ENCODE measurements at regions of chr6 and their contacts with region 1.

Region 1: DNA sequence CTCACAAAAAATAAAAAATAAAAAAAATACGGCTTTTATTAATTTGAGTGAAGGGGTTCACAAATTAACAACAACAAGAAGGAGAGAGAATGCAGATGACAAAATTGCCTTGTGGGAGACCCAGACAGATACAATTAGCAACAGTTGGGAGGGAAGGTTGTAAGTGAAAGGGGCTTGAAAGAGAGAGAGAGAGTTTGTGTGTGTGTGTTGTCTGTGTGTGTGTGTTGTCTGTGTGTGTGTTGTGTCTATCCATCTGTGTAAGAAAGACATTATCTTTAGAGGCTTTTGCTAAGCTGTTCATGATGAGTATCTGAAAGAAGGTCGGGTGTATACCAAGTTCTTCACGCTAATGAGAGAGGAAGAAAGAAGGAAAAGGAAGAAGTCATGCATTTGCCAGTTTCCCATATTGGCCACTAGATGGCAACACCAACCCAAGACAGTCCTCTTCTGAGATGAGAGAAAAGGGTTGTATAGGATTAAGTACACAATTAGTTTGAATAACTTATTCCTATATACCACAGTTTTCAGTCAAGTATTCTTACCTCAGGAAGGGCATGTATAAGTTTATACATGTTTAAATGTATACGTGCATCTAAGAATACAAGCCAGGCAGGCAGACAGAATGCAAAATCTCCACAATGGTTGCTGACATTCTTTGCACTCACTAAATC is 63.7 kb upstream of the CD2AP start:
- DNase-seq: no peak
- ATAC-seq: peak; percentile 92
- H3K4me3 ChIP-seq: peak overlapping the region; percentile 47 to 92
- H3K27ac ChIP-seq: no peak overlapping the region
- H3K4me1 ChIP-seq: no peaks in the 10 kb centered on the region
- H3K27me3 ChIP-seq: no peaks in the 10 kb centered on the region

Region 2: DNA sequence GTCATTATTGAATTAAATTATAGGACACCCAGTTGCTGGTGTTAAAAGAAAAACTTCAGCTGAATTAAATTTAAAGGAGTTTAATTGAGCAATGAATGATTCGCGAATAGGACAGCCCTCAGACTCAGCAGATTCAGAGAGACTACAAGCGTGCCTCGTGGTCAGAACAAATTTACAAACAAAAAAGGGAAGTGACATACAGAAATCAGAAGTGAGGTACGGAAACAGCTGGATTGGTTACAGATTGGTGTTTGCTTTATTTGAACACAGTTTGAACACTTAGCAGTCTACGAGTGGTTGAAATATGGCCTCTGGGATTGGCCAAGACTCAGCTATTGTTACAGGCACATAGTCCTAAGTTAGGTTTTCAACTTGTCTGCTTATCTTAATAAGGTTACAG is 78.4 kb before region 1 on chr6:
- intact Hi-C with region 1: no loop called
- DNase-seq: no peak
- ATAC-seq: no peak
- H3K4me3 ChIP-seq: no peak overlapping the region
- H3K27ac ChIP-seq: no peak overlapping the region
- H3K4me1 ChIP-seq: no peaks in the 10 kb centered on the region
- H3K27me3 ChIP-seq: no peaks in the 10 kb centered on the region

Region 3: GRCh38 chr6:47477497-47478232 is 63.8 kb after region 1 on chr6 and contains the start of gene CD2AP:
- intact Hi-C with region 1: loop called in 1 of 2 experiments (anchors 10 kb)
- DNase-seq: peak; percentile 87 to 95
- ATAC-seq: peak; percentile 95
- H3K4me3 ChIP-seq: peak within 1 kb of the TSS; percentile 50 to 88
- H3K27ac ChIP-seq: peak within 1 kb of the TSS; percentile 45 to 87
- H3K4me1 ChIP-seq: no peaks in the 10 kb centered on the region
- H3K27me3 ChIP-seq: no peaks in the 10 kb centered on the region
- total RNA-seq, gene CD2AP: 25.2 to 33.4 TPM

Region 4: DNA sequence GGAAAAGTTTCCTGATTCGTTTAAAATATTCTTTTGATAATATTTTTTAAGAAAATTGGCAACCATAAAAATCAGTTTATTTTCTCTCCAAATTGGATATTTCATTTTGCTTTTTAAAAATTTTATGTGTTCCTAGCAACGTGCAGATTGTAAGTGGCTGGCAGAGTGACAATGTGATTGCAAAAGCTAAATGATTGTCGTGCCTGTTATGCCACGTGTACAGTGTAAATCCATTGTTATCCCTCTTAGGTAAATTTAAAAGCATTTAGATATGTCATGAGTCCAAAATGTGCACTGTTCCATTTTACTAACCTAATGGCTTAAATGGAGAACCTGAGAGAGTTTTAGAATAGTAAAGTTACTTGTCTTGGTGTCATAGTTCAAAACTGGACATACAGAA is 190.1 kb after region 1 on chr6:
- intact Hi-C with region 1: loop called (anchors 10 kb)
- DNase-seq: no peak
- ATAC-seq: no peak
- H3K4me3 ChIP-seq: no peak overlapping the region
- H3K27ac ChIP-seq: no peak overlapping the region
- H3K4me1 ChIP-seq: no peaks in the 10 kb centered on the region
- H3K27me3 ChIP-seq: no peaks in the 10 kb centered on the region

Region 5: DNA sequence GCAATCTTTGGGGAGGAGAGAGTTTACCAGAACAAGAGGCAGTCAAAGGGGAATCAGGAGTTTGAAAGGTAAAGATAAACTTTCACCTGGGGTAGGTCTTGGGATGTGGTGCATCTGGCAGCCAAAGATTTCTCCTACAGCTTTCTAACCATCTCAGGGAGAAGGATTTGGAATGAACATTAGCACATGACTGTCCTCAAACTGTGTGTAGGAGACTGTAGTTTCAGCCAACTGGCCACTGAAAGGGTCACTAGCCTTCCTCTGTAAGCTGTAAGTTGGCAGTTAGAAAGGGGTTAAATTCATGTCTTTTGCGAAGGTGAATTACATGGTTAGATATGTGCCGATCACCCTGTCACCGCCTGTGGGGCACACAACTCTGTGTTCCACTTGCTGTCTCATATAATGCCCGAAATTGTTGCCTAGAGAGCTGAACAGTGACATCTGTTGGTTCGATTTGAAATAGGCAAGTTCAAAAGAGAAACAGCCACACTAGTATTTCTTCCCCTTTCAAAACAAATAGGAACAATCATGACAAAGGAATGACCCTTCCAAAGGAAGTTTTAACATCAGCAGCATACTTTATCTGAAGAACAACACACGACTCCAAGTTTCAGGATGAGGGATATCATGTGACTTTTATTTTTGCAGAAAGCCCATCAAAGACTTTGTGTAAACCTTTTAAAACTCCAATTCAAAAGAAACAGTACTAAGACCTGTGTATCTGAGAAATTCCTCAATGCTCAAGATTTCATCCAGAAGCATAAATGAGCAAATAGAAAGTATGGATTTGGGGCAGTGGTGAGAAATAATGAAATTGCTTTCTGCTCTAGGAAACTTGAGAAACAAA is 366.8 kb after region 1 on chr6:
- intact Hi-C with region 1: loop called (anchors 2 to 5 kb)
- DNase-seq: peak in 1 of 2 donors; percentile 35
- ATAC-seq: peak; percentile 77
- H3K4me3 ChIP-seq: no peak overlapping the region
- H3K27ac ChIP-seq: no peak overlapping the region
- H3K4me1 ChIP-seq: no peaks in the 10 kb centered on the region
- H3K27me3 ChIP-seq: peaks cover 0 to 1% of the 10 kb centered on the region in 2 donors